ENCODE measurements at regions of chr11 and their contacts with region 1.

Region 1: DNA sequence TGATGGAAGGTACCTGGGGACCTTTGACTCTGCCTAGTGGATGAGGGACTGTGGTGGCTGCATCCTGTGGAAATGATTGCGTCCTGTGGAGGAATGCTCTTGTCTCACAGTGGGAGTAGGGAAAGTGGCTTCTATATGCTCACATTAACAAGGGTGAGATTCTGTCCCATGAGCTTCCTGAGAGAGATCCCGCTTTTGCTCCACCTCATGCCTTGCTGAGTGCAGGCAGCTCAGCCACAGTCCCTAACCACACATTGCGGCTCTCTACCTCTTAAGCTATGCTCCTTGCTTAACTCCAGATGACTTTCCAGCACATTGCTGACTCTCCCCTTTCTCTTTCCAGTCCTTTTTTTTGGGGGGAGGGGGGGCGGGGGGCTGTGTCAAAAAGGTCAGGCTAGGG is 45.0 kb downstream of the TEAD1 start:
- DNase-seq: no peak
- H3K4me3 ChIP-seq: no peak overlapping the region
- H3K27ac ChIP-seq: no peak overlapping the region
- H3K27me3 ChIP-seq: no peaks in the 10 kb centered on the region
- CTCF ChIP-seq: no peak

Region 2: DNA sequence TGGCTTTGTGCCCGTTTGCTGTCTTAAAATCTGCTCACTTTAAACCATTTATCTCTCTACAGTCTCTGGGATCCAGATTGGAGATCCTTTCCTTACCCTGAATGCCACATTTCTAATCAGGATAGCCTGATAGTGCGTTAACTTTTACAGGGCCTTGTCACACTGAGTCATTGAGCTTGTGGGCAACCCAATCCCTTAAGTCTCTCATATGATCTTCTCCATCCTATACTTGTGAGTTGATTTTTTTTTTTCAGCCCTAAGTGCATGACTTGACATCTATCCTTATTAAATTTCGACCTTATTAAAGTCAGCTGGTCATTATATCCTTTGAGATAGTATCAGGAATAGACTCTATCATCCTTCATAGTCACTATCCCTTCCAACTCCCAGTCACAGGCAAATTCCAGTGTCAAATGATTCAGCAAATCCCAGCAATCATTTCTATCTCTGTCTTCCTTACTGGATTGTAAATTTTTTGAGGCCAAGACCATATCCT is 12.7 kb after region 1 on chr11:
- CTCF ChIA-PET with region 1: no interaction called
- POLR2A ChIA-PET with region 1: no interaction called
- DNase-seq: no peak
- H3K4me3 ChIP-seq: no peak overlapping the region
- H3K27ac ChIP-seq: no peak overlapping the region
- H3K27me3 ChIP-seq: no peaks in the 10 kb centered on the region
- CTCF ChIP-seq: no peak

Region 3: GRCh38 chr11:12746593-12747097 is 27.4 kb after region 1 on chr11:
- CTCF ChIA-PET with region 1: interaction called, 10 read pairs
- POLR2A ChIA-PET with region 1: no interaction called
- DNase-seq: peak; percentile 84
- H3K4me3 ChIP-seq: no peak overlapping the region
- H3K27ac ChIP-seq: peak overlapping the region; percentile 55
- H3K27me3 ChIP-seq: no peaks in the 10 kb centered on the region
- CTCF ChIP-seq: peak; percentile 27; the same call in 1 of the 2 replicates

Region 4: DNA sequence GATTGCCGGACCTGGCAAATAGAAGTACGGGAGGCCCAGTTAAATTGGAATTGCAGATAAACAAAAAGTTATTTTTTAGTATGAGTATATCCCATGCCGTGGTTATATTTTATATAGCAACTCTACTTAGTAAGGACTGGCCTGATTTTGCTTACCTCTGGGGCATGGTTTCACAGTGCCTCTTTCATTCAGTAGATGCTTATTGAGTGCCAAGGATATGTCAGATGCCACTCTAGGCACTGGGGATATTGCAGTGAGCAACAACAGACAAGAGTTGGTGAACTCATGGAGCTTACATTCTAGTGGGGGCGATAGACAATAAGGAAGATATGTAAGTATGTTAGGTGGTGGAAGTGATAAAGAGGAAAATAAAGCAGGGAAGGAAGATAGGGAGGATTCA is 67.2 kb after region 1 on chr11:
- CTCF ChIA-PET with region 1: no interaction called
- POLR2A ChIA-PET with region 1: no interaction called
- DNase-seq: no peak
- H3K4me3 ChIP-seq: no peak overlapping the region
- H3K27ac ChIP-seq: no peak overlapping the region
- H3K27me3 ChIP-seq: no peaks in the 10 kb centered on the region
- CTCF ChIP-seq: no peak